ENCODE measurements at regions of chr13 and their contacts with region 1.

Region 1: DNA sequence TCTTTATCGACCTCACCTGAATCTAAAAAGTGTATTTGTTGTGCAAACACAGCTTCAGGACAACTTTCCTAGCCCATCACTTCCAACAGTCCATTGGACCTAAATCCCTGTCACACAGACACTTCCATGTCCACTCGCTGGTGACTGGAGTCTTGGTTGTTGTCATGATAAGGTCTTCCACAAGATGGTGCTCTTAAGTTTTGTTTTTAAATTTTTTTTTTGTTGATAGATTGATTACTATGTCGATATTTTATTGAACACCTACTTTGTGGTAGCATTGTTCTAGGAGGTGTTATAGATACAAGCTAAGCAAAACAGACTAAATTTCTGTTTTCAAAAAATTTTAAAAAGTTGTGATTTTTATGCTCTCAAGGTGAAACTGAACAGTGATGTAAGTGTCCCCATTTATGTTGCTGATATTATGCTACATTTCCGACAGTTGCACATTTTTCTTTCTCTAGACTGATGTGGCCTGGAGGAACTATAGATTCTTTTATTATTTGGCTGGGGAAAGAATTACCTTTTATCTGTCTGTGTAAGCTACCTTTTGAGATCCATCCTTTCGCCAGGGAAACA is 8.1 kb upstream of the ERICH6B start:
- DNase-seq: peak; percentile 40
- H3K4me3 Mint-ChIP-seq: no peak overlapping the region
- H3K27ac Mint-ChIP-seq: no peak overlapping the region
- H3K4me1 Mint-ChIP-seq: peaks cover 10% of the 10 kb centered on the region
- H3K27me3 Mint-ChIP-seq: peaks cover 75% of the 10 kb centered on the region
- CTCF ChIP-seq: peak; percentile 64

Region 2: GRCh38 chr13:45370922-45371406 is 252.6 kb before region 1 on chr13:
- CTCF ChIA-PET with region 1: no interaction called
- POLR2A ChIA-PET with region 1: no interaction called
- intact Hi-C with region 1: no loop called
- DNase-seq: peak; percentile 69
- H3K4me3 Mint-ChIP-seq: no peak overlapping the region
- H3K27ac Mint-ChIP-seq: no peak overlapping the region
- H3K4me1 Mint-ChIP-seq: peaks cover 25% of the 10 kb centered on the region
- H3K27me3 Mint-ChIP-seq: no peaks in the 10 kb centered on the region
- CTCF ChIP-seq: peak; percentile 90

Region 3: DNA sequence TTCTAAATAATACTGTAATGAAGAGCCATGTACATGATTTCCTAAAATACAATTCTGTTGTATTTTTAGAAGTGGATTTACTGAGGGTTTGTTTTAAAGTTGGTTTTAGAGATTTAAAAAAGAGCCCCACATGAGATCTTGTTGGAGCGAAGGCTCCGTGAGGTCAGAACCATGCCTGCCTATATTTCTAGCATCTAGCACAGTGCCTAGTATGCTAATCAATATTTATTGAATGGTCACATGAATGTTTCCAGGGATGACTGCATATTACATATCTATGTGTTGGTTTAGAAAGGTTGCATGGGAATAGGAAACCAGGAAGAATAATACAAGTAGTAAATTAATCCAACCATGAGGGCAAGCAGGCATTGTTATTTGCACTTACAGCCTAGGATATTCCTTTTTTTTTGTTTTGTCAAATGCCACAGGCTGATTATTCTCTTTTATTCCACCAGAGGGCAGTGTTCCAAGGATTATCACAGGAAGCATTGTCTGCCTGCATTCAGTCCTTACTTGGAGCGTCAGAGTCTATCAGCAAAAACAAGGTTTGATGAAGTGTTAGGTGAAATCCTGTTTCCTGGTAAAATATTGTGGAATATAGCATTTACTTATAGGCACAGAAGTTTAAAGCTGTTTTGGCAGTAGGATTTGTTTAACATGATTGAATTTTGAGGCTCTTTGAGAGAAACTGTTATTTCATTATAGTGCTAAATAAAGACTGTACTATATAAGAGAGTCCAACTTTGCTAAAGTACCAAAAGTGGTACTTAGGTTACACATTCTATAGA is 112.1 kb before region 1 on chr13:
- CTCF ChIA-PET with region 1: no interaction called
- POLR2A ChIA-PET with region 1: no interaction called
- intact Hi-C with region 1: no loop called
- DNase-seq: peak; percentile 71
- H3K4me3 Mint-ChIP-seq: no peak overlapping the region
- H3K27ac Mint-ChIP-seq: no peak overlapping the region
- H3K4me1 Mint-ChIP-seq: peaks cover 6% of the 10 kb centered on the region
- H3K27me3 Mint-ChIP-seq: no peaks in the 10 kb centered on the region
- CTCF ChIP-seq: peak; percentile 69

Region 4: DNA sequence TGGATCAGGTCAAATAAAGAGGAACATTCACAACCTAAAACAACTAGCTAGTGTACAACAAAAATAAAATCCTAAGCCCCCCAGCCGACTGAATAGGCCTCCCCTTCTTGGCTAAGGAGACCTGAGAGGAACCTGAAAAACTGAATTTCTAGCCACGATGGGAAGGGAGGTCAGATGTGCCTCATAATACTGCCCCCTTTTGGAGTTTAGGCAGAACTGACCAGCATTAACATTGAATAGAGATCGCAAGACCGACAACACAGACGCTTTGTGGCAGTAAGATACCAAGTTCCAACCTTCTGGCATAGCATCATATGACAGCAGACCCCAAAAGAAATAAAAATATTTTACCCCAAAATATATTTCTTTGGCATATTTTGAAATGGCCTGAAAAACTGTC is 94.5 kb after region 1 on chr13:
- CTCF ChIA-PET with region 1: interaction called, 7 read pairs
- POLR2A ChIA-PET with region 1: no interaction called
- intact Hi-C with region 1: loop called (anchors 1 kb)
- DNase-seq: peak; percentile 49
- H3K4me3 Mint-ChIP-seq: no peak overlapping the region
- H3K27ac Mint-ChIP-seq: no peak overlapping the region
- H3K4me1 Mint-ChIP-seq: no peaks in the 10 kb centered on the region
- H3K27me3 Mint-ChIP-seq: peaks cover 26% of the 10 kb centered on the region
- CTCF ChIP-seq: peak; percentile 58

Region 5: DNA sequence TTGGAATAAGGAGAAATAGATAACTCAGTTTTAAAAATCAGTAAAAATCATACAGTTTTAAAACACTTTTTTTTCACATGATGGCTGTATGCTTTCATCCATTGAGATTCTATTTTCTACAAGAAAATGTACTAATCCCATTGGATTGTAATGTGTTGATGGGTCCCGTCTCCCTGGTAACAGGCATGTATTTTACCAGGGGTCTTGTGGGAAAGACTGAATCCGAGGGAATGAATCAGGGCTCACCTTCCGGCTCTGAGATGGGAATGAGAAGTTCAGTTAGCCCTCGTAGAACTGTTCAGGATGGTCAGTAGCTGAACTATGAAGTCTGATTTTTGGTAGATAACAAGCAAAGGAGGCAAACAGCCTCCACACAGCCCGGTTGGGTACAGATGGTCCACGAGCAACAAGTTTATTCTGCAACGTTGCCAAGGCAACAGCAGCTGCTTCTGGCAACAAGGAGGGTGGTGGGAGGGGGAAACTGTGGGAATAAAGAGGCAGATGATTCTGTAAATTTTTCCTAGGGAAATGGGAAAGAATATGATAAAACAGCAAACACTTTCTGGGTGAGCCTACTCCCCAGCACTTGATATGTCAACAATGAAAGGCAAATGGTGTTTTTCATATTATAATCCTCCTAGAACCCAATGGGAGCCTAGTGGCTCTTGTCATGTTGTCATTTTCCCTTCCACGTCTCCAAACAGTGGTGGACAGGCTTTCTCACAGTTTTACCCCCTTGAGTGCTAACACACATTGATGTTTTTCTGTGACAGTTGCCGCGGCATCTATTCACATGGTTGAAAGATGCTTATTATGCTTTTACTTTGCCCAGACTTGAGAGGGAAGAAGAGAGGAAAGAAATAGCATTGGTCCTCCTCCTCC is 240.3 kb after region 1 on chr13:
- CTCF ChIA-PET with region 1: no interaction called
- POLR2A ChIA-PET with region 1: no interaction called
- intact Hi-C with region 1: no loop called
- DNase-seq: no peak
- H3K4me3 Mint-ChIP-seq: no peak overlapping the region
- H3K27ac Mint-ChIP-seq: no peak overlapping the region
- H3K4me1 Mint-ChIP-seq: peaks cover 6% of the 10 kb centered on the region
- H3K27me3 Mint-ChIP-seq: peaks cover 34% of the 10 kb centered on the region
- CTCF ChIP-seq: no peak

Region 6: GRCh38 chr13:45879670-45880069 is 256.1 kb after region 1 on chr13:
- CTCF ChIA-PET with region 1: interaction called, 17 read pairs
- POLR2A ChIA-PET with region 1: no interaction called
- intact Hi-C with region 1: no loop called
- DNase-seq: peak; percentile 76
- H3K4me3 Mint-ChIP-seq: no peak overlapping the region
- H3K27ac Mint-ChIP-seq: no peak overlapping the region
- H3K4me1 Mint-ChIP-seq: peaks cover 6% of the 10 kb centered on the region
- H3K27me3 Mint-ChIP-seq: peaks cover 5% of the 10 kb centered on the region
- CTCF ChIP-seq: peak; percentile 40

Region 7: DNA sequence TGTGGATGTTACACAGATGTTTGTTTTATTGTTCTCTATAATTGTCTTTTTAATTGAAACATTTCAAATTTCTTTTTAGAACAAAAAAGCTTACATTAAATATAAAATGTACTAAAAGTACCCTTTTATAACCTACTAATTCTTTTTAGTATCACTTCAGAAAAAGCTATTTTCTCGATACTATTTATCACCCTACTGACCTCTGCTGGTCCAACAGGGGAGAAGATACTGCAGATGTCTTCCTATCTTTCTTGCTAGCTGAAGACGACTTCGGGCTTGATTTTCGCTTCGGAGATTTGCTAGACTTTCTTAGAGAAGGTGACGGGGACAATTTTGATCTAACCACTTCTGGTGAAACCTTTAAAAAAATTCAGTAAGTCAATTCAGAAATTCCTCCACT is 386.5 kb after region 1 on chr13:
- CTCF ChIA-PET with region 1: interaction called, 13 read pairs
- POLR2A ChIA-PET with region 1: no interaction called
- intact Hi-C with region 1: no loop called
- DNase-seq: peak; percentile 17
- H3K4me3 Mint-ChIP-seq: no peak overlapping the region
- H3K27ac Mint-ChIP-seq: no peak overlapping the region
- H3K4me1 Mint-ChIP-seq: no peaks in the 10 kb centered on the region
- H3K27me3 Mint-ChIP-seq: no peaks in the 10 kb centered on the region
- CTCF ChIP-seq: peak; percentile 11

Region 8: DNA sequence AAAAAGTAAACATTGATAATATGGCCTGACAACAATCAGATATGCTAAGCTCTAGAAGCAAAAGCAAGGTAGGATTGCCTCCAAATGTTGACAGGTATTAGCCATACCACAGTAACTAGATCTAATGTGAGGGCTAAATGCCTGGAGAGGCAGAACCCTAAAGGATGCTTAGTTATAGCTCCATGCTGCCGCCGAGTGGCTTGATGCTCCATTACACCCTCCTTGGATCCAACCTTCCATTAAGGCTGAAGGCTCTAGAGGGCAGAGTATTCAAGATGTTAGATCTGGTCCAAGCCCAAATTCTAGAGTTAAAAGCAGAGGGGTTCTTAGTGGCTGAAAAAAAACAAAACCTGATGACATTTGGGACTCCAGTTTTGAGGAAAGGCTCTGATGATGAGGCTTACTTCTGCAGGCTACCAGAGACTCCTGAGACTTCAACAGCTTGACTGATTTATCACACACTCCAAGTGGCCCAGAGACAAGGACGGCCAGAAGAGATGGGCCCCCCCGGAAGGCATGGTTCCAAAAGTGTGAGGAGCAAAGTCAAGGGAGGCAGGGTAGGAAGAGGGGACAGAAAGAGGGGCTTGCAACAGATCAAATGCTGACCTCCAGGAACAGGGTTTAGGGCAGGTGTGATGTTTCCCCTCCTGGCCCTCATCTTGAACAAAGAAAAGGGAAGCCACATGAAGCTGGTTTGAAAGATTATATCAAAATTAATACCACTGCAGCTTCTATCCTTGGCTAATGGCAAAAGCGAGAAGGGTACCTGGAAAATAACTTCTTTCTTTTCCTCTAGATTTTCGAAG is 503.2 kb after region 1 on chr13:
- CTCF ChIA-PET with region 1: interaction called, 28 read pairs
- POLR2A ChIA-PET with region 1: no interaction called
- intact Hi-C with region 1: loop called (anchors 1 kb)
- DNase-seq: peak; percentile 87
- H3K4me3 Mint-ChIP-seq: no peak overlapping the region
- H3K27ac Mint-ChIP-seq: no peak overlapping the region
- H3K4me1 Mint-ChIP-seq: peaks cover 6% of the 10 kb centered on the region
- H3K27me3 Mint-ChIP-seq: peaks cover 29% of the 10 kb centered on the region
- CTCF ChIP-seq: peak; percentile 88

Region 9: GRCh38 chr13:46359750-46360149 is 736.1 kb after region 1 on chr13:
- CTCF ChIA-PET with region 1: no interaction called
- POLR2A ChIA-PET with region 1: no interaction called
- intact Hi-C with region 1: no loop called
- DNase-seq: no peak
- H3K4me3 Mint-ChIP-seq: no peak overlapping the region
- H3K27ac Mint-ChIP-seq: no peak overlapping the region
- H3K4me1 Mint-ChIP-seq: peaks cover 3% of the 10 kb centered on the region
- H3K27me3 Mint-ChIP-seq: no peaks in the 10 kb centered on the region
- CTCF ChIP-seq: no peak